Endothelial cell of umbilical vein (primary cell): ENCODE measurements at regions of chr11 and their contacts with region 1.

Region 1: DNA sequence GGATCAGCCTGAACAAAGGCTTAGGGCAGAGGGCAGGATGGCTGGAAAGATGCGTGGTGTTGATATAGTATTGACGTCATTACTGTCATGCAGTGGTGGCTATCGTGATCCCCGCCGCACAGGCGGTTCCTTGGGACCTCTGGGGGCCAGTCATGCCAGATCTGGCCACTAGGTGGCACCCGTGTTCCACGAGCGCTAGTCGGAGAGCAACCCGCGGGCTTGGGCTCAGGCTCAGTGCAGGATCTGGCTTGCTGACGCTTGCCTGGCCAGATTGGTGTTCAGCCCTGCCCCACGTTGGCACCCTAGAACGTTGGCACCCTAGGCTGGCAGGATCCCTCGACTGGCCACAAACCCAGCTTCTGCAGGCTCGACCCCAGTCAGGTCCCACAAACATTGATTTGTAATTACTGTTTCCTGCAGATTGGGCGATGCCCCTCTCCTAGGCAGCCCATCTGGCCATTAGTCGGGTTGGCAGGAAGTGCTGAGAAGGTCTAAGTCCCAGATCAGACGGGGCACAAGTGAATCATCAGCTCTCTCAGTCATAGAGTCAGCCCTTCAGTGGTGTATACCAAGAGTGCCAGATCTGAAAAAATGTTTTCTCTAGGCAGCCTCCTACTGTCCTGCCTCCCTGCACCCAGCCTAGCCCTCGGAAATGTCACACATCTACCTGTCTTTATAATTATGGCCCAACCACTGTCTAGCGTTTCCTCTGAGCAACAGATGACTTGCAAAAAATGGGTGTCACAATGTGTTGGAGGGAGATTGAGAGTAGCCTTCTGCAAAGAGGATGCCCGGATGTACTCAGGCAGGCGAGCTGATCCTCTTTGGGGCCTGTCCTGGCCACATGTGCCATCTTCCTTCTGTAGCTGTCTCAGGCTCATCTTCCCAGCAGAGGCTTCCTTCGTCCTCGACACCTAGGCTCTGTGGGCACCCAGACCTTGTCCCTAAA is 315.3 kb downstream of the TMEM135 start:
- DNase-seq: peak; percentile 89
- H3K4me3 ChIP-seq: no peak overlapping the region
- H3K27ac ChIP-seq: peak overlapping the region; percentile 62
- H3K4me1 ChIP-seq: peaks cover 18% of the 10 kb centered on the region
- H3K27me3 ChIP-seq: no peaks in the 10 kb centered on the region
- CTCF ChIP-seq: peak; percentile 96 to 97
- POLR2A ChIP-seq: no peak

Region 2: GRCh38 chr11:86386746-86387145 is 966.3 kb before region 1 on chr11:
- CTCF ChIA-PET with region 1: no interaction called
- POLR2A ChIA-PET with region 1: no interaction called
- dilution Hi-C with region 1: no loop called
- intact Hi-C with region 1: no loop called
- DNase-seq: no peak
- H3K4me3 ChIP-seq: no peak overlapping the region
- H3K27ac ChIP-seq: no peak overlapping the region
- H3K4me1 ChIP-seq: peaks cover 12% of the 10 kb centered on the region
- H3K27me3 ChIP-seq: no peaks in the 10 kb centered on the region
- CTCF ChIP-seq: no peak
- POLR2A ChIP-seq: no peak

Region 3: GRCh38 chr11:87324817-87325489 is 28.1 kb before region 1 on chr11:
- CTCF ChIA-PET with region 1: no interaction called
- POLR2A ChIA-PET with region 1: no interaction called
- dilution Hi-C with region 1: no loop called
- intact Hi-C with region 1: no loop called
- DNase-seq: no peak
- H3K4me3 ChIP-seq: no peak overlapping the region
- H3K27ac ChIP-seq: no peak overlapping the region
- H3K4me1 ChIP-seq: no peaks in the 10 kb centered on the region
- H3K27me3 ChIP-seq: no peaks in the 10 kb centered on the region
- CTCF ChIP-seq: no peak
- POLR2A ChIP-seq: no peak

Region 4: GRCh38 chr11:87368858-87369480 is 15.9 kb after region 1 on chr11:
- CTCF ChIA-PET with region 1: interaction called, 53 read pairs
- POLR2A ChIA-PET with region 1: interaction called, 3 read pairs
- dilution Hi-C with region 1: no loop called
- intact Hi-C with region 1: loop called (anchors 1 kb)
- DNase-seq: peak; percentile 97
- H3K4me3 ChIP-seq: peak overlapping the region in 1 of 3 experiments; percentile 5
- H3K27ac ChIP-seq: peak overlapping the region; percentile 94
- H3K4me1 ChIP-seq: peaks cover 47% of the 10 kb centered on the region
- H3K27me3 ChIP-seq: no peaks in the 10 kb centered on the region
- CTCF ChIP-seq: no peak
- POLR2A ChIP-seq: peak; percentile 65

Region 5: DNA sequence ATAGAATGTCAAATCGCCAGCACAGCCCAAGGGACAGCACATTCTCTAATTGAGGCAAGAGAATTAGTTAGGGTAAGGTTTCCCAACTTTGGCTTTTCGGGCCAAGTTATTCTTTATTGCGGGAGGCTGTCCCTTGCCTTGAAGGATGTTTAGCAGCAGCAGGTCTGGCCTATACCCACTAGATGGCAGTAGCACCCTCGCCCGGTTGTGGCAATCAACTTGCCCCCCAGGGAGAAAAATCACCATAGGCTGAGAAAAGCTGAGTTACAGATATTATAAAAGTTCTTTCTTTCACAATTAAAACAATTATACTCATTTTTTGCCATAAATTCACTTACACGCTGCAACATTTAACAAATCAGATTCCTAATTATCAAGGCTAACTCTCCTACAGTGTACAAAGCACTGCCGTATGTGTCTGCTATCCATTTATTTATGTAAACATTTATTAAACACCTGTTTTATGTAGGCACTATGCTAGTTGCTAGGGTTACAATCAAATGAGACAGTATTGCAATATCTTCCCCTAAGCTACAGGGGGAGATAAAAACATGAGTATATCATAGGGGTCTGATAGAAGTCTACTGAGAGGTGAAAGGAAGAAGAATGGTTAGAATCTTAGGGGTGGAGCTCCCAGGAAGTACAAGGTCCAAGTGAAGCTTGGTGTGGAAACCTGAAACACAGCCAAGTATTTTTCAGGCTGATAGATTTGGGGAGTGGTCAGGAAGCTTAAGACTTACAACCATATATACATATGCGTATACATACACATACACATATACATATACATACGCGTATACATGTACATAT is 369.9 kb after region 1 on chr11:
- CTCF ChIA-PET with region 1: interaction called, 3 read pairs
- POLR2A ChIA-PET with region 1: no interaction called
- dilution Hi-C with region 1: no loop called
- intact Hi-C with region 1: loop called (anchors 2 kb)
- DNase-seq: peak; percentile 14
- H3K4me3 ChIP-seq: no peak overlapping the region
- H3K27ac ChIP-seq: no peak overlapping the region
- H3K4me1 ChIP-seq: no peaks in the 10 kb centered on the region
- H3K27me3 ChIP-seq: no peaks in the 10 kb centered on the region
- CTCF ChIP-seq: peak; percentile 68 to 69
- POLR2A ChIP-seq: no peak

Region 6: GRCh38 chr11:87878373-87878779 is 525.3 kb after region 1 on chr11:
- CTCF ChIA-PET with region 1: interaction called, 5 read pairs
- POLR2A ChIA-PET with region 1: no interaction called
- dilution Hi-C with region 1: no loop called
- intact Hi-C with region 1: loop called (anchors 5 kb)
- DNase-seq: peak; percentile 43
- H3K4me3 ChIP-seq: no peak overlapping the region
- H3K27ac ChIP-seq: no peak overlapping the region
- H3K4me1 ChIP-seq: no peaks in the 10 kb centered on the region
- H3K27me3 ChIP-seq: no peaks in the 10 kb centered on the region
- CTCF ChIP-seq: peak; percentile 18 to 39
- POLR2A ChIP-seq: no peak